Panc1 (cell line): ENCODE measurements at regions of chr10 and their contacts with region 1.

Region 1: DNA sequence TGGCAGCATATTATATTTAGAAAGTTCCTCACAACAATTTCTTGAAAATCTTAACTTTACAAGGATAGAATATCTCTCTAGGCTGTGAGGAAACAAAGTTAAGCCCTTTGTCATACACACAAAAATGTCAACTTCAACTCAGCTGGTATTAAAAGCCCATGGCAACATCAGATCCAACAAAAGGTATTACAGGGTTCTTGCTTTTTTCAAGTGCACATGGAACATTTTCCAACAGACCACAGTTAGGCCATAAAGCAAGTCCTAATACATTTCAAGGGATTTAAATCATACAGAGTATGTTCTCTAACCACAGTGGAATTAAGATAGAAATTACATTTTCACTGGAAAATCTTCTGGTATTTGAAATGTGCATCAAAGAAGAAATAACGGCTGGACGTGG is 71.9 kb upstream of the OIT3 start:
- DNase-seq: no peak
- ATAC-seq: no peak
- H3K4me3 ChIP-seq: no peak overlapping the region
- H3K27ac ChIP-seq: no peak overlapping the region
- H3K4me1 ChIP-seq: 0 out of 2 replicates have a peak, but pooled peaks cover 3% of the 10 kb centered on the region
- H3K27me3 ChIP-seq: no peaks in the 10 kb centered on the region
- CTCF ChIP-seq: no peak

Region 2: GRCh38 chr10:72273410-72274212 is 548.0 kb before region 1 on chr10 and contains the start of gene DDIT4:
- CTCF ChIA-PET with region 1: no interaction called
- POLR2A ChIA-PET with region 1: interaction called, 17 read pairs
- in situ Hi-C with region 1: no loop called
- intact Hi-C with region 1: no loop called
- DNase-seq: peak; percentile 94
- ATAC-seq: peak; percentile 91
- H3K4me3 ChIP-seq: peak within 1 kb of the TSS; percentile 93 to 99
- H3K27ac ChIP-seq: peak within 1 kb of the TSS; percentile 91
- H3K4me1 ChIP-seq: peaks cover 40% of the 10 kb centered on the region
- H3K27me3 ChIP-seq: no peaks in the 10 kb centered on the region
- CTCF ChIP-seq: no peak
- total RNA-seq, gene DDIT4: 157 TPM

Region 3: GRCh38 chr10:72875250-72876055 is 53.8 kb after region 1 on chr10:
- CTCF ChIA-PET with region 1: no interaction called
- POLR2A ChIA-PET with region 1: interaction called, 10 read pairs
- in situ Hi-C with region 1: no loop called
- intact Hi-C with region 1: no loop called
- DNase-seq: peak; percentile 24
- ATAC-seq: 0 out of 2 replicates have a peak, but pooled peaks have one; percentile 58
- H3K4me3 ChIP-seq: no peak overlapping the region
- H3K27ac ChIP-seq: no peak overlapping the region
- H3K4me1 ChIP-seq: no peaks in the 10 kb centered on the region
- H3K27me3 ChIP-seq: no peaks in the 10 kb centered on the region
- CTCF ChIP-seq: peak; percentile 81; the same call in 1 of the 2 replicates

Region 4: DNA sequence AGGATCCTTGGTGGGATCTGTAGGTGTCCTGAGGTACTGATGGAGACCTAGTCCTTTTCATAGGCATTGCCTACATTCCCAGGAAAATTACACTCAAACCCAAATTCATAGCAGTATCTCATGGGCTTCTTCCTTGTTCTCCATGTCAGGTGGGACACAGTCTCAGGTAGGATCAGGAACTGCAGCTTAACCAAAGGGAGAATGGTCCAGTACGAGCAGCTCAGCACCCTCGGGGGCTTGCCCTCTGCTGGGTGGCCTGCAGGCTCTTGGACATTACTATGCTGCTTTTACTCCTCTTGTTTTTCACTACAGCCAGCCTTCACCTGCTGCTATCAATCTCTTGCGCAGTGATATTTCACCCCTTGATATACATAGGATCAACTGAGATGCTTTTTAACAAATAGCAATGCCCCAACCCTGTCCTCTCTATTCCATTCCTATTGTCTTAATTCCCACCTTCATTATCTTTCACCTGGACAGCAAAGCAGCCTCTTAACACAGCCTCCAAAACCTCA is 104.4 kb after region 1 on chr10:
- CTCF ChIA-PET with region 1: no interaction called
- POLR2A ChIA-PET with region 1: interaction called, 14 read pairs
- in situ Hi-C with region 1: no loop called
- intact Hi-C with region 1: no loop called
- DNase-seq: no peak
- ATAC-seq: peak; percentile 62
- H3K4me3 ChIP-seq: no peak overlapping the region
- H3K27ac ChIP-seq: no peak overlapping the region
- H3K4me1 ChIP-seq: no peaks in the 10 kb centered on the region
- H3K27me3 ChIP-seq: 0 out of 2 replicates have a peak, but pooled peaks cover 2% of the 10 kb centered on the region
- CTCF ChIP-seq: no peak

Region 5: DNA sequence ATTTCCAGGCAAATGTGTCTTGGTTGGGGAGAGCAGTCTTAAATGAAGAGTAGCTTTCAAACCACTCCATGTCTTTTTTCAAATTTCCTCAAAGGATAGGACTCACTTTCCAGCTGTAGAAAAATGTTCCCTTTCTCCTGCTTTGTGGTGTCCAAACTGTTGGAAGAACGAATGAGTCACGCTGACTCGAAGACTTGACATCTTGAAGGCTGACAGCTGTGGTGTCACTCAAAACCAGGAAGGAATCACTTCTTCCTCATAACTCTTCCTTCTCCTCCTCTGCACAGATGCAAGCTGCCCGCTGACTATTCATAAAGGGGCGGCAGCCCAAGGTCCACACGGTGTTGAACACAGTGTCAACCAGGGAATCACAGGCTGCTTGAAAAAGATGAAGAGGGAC is 113.8 kb after region 1 on chr10:
- CTCF ChIA-PET with region 1: no interaction called
- POLR2A ChIA-PET with region 1: interaction called, 14 read pairs
- in situ Hi-C with region 1: no loop called
- intact Hi-C with region 1: no loop called
- DNase-seq: no peak
- ATAC-seq: no peak
- H3K4me3 ChIP-seq: no peak overlapping the region
- H3K27ac ChIP-seq: no peak overlapping the region
- H3K4me1 ChIP-seq: no peaks in the 10 kb centered on the region
- H3K27me3 ChIP-seq: no peaks in the 10 kb centered on the region
- CTCF ChIP-seq: no peak

Region 6: GRCh38 chr10:72954596-72955554 is 133.3 kb after region 1 on chr10 and contains the start of gene PLA2G12B:
- CTCF ChIA-PET with region 1: no interaction called
- POLR2A ChIA-PET with region 1: no interaction called
- in situ Hi-C with region 1: no loop called
- intact Hi-C with region 1: no loop called
- DNase-seq: no peak
- ATAC-seq: peak; percentile 71
- H3K4me3 ChIP-seq: no peak within 1 kb of the TSS
- H3K27ac ChIP-seq: no peak within 1 kb of the TSS
- H3K4me1 ChIP-seq: no peaks in the 10 kb centered on the region
- H3K27me3 ChIP-seq: peaks cover under 1% of the 10 kb centered on the region; the same call in 1 of the 2 replicates
- CTCF ChIP-seq: no peak
- total RNA-seq, gene PLA2G12B: not detected

Region 7: DNA sequence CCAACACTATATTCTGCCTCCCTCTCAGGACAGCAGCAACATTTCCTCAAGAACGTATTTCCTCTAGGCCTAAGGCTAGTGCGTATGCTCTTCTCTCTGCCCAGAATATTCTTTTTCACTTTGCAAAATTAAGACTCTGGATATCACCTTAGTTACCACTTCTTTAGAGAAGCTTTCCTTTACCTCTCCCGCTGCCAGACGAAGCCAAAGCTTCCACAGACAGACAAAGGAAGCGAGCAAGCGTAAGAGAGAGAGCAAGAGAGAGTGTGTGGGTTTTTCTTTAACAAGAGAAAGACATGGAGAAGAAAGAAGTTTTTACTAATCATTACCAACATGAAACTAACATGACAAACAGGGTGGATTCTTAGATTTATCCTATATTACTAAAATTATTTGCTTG is 210.9 kb after region 1 on chr10:
- CTCF ChIA-PET with region 1: no interaction called
- POLR2A ChIA-PET with region 1: no interaction called
- in situ Hi-C with region 1: no loop called
- intact Hi-C with region 1: no loop called
- DNase-seq: no peak
- ATAC-seq: no peak
- H3K4me3 ChIP-seq: no peak overlapping the region
- H3K27ac ChIP-seq: no peak overlapping the region
- H3K4me1 ChIP-seq: no peaks in the 10 kb centered on the region
- H3K27me3 ChIP-seq: no peaks in the 10 kb centered on the region
- CTCF ChIP-seq: no peak